Calu3 (cell line): ENCODE measurements at regions of chr2 and their contacts with region 1.

Region 1: DNA sequence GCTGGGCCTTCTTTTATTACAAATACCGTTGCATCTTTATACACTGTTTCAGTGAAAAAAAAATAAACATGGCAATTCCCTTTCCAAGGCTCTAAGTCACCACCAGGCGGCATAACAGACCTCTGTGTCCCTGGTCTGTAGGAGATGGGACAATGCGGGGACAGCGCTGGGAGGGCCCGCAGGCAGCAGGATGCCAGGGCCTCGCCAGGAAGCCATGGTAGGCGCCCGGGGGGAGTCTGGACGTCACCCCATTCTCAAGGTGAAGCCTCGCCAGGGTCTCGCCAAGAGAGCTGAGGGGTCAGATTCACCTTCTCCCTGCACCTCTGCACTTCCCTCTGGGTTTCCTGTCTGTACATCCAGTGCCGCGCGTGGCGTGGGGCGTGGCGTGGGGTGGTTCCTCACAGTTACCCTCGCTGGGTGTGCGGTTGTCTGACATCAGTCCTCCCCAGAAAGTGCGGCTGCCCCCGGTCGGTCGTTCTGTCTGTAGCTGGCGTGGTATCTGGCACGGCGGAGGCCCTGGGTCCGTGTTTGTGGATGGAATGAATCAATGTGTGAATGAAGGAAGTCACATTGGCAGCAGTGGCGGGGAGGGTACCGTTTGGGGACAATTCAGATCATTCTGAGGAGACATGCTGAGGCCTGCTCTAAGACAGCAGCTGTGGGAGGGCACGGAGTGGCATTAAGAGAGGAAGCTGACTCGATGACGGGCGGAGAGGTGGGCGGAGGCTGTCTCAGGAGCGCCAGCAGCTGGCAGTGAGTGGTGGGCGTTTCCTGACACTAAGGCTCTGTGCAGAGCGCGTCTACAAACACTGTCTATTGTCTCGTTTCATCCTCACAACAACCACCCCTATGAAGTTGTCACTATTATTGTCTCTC is 46.0 kb downstream of the LRRFIP1 start:
- DNase-seq: peak; percentile 79
- H3K4me3 Mint-ChIP-seq: peak overlapping the region; percentile 77
- H3K27ac Mint-ChIP-seq: peak overlapping the region; percentile 20
- H3K4me1 Mint-ChIP-seq: peaks cover 30% of the 10 kb centered on the region
- H3K27me3 Mint-ChIP-seq: peaks cover 31% of the 10 kb centered on the region
- CTCF ChIP-seq: peak; percentile 79

Region 2: GRCh38 chr2:237685408-237685807 is 12.0 kb after region 1 on chr2:
- CTCF ChIA-PET with region 1: interaction called, 10 read pairs
- intact Hi-C with region 1: no loop called
- DNase-seq: no peak
- H3K4me3 Mint-ChIP-seq: no peak overlapping the region
- H3K27ac Mint-ChIP-seq: no peak overlapping the region
- H3K4me1 Mint-ChIP-seq: peaks cover 38% of the 10 kb centered on the region
- H3K27me3 Mint-ChIP-seq: no peaks in the 10 kb centered on the region
- CTCF ChIP-seq: no peak

Region 3: GRCh38 chr2:237695201-237695780 is 21.9 kb after region 1 on chr2:
- CTCF ChIA-PET with region 1: interaction called, 11 read pairs
- intact Hi-C with region 1: no loop called
- DNase-seq: no peak
- H3K4me3 Mint-ChIP-seq: peak overlapping the region; percentile 84
- H3K27ac Mint-ChIP-seq: peak overlapping the region; percentile 91
- H3K4me1 Mint-ChIP-seq: peaks cover 59% of the 10 kb centered on the region
- H3K27me3 Mint-ChIP-seq: no peaks in the 10 kb centered on the region
- CTCF ChIP-seq: no peak

Region 4: DNA sequence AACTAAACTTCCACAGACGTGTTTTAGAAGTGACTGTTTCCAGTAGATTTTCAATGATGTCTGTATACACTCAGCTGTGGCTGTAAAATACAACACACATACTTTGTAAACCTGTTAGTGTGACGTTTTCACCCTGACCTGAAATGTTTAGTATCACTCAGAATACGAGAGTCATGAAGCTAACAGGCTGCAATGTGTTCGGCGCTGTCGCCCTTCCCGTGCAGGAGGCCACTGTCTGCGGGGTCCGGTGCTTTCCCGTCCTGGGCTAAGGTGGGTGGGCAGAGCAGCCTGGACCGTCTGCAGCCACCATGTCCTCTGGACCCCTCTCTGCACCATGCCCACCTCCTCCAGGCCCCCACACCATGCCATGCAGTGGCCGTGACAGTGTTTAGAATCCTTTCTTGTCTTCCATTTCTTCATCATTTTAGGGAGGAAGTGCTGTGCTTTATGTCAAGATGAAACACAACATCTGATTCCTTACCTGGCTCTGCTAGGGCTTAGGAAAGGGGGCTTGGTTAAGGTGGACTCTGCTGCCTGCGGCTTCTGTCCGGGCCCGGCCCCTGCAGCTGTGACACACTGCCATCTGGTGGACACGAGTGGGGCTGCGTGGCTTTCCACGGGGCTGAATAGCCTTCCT is 71.4 kb after region 1 on chr2:
- CTCF ChIA-PET with region 1: interaction called, 17 read pairs
- intact Hi-C with region 1: loop called (anchors 1 kb)
- DNase-seq: peak; percentile 84
- H3K4me3 Mint-ChIP-seq: no peak overlapping the region
- H3K27ac Mint-ChIP-seq: peak overlapping the region; percentile 64
- H3K4me1 Mint-ChIP-seq: peaks cover 45% of the 10 kb centered on the region
- H3K27me3 Mint-ChIP-seq: no peaks in the 10 kb centered on the region
- CTCF ChIP-seq: peak; percentile 93

Region 5: DNA sequence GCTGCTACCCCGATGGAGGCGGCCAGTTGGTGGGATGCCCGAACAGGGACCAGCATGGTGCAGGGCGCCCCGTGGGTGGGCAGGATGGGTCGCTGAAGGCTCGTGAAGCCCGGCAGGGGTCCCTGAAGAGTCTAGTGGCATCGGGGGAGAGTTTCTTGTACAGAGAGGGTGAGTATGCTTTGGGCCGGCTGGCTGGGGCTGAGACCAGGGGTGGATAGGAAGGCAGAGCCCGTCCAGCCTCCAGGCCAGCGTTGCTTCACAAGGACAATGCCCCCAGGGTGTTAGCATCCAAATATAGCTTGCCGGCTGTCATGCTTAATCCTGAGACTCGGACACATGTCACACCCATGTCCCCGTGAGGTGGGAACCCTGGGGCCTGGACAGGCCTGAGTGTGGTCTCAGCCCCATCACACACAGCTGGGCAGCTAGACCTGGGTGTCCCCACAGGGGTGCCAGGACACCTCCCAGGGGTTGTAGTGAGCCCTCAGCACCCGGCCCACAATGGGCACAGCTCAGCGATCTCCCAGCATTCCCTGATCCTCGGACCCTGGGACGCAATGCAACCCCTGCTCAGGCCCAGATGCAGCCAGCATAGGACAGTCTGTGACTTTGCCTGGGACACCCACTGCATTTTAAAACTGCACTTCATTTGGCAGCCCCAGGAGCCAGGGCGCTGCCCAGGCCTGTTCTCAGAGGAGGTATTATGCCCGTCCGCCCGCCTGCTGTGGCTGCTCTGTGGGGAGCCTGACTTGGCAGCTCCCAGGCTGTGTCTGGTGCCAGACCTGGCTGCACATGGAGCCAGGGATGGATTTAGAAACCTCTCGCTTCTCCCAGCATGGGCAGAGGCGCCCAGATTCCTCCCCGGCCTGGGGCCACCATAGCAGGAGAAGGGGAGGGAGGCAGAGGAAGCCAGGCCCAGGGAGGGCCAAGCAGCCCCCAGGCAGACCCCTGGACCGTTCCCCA is 222.5 kb after region 1 on chr2:
- CTCF ChIA-PET with region 1: no interaction called
- intact Hi-C with region 1: no loop called
- DNase-seq: no peak
- H3K4me3 Mint-ChIP-seq: no peak overlapping the region
- H3K27ac Mint-ChIP-seq: no peak overlapping the region
- H3K4me1 Mint-ChIP-seq: peaks cover 8% of the 10 kb centered on the region
- H3K27me3 Mint-ChIP-seq: no peaks in the 10 kb centered on the region
- CTCF ChIP-seq: no peak